Activated CD4-positive, alpha-beta T cell treated with anti-CD3 and anti-CD28 coated beads, Interleukin-2, amount 10 ng/mL, durations not matched to agents 24 days and 14 days (primary cell): ENCODE measurements at regions of chr6 and their contacts with region 1.

Region 1: GRCh38 chr6:13668291-13668928 is 43.2 kb downstream of the RANBP9 start:
- DNase-seq: no peak
- H3K4me3 Mint-ChIP-seq: peak overlapping the region; percentile 14
- H3K27ac Mint-ChIP-seq: peak overlapping the region; percentile 65
- H3K4me1 Mint-ChIP-seq: peaks cover 61% of the 10 kb centered on the region
- H3K27me3 Mint-ChIP-seq: no peaks in the 10 kb centered on the region

Region 2: DNA sequence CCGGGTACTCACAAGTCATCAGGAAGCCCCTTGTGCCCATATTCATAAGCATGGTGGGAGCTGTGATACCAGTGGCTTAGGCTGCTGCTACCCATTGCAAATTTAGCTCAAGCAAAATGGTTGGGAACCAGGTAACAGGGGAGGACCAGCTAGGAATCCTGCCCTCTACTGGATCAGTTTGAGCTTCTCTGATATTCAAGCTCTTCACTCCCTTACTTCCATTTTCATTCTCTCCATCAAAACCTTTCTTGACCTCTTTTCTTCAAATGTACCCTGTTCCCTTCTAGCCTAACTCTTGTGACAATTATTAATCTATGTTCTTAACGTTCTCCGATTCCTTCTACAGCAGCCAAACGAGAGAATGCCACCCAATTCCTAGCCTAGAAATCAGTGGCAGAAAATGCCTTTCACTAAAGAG is 43.5 kb before region 1 on chr6:
- intact Hi-C with region 1: loop called (anchors 1 kb)
- DNase-seq: peak; percentile 74
- H3K4me3 Mint-ChIP-seq: no peak overlapping the region
- H3K27ac Mint-ChIP-seq: no peak overlapping the region
- H3K4me1 Mint-ChIP-seq: peaks cover 11% of the 10 kb centered on the region
- H3K27me3 Mint-ChIP-seq: no peaks in the 10 kb centered on the region

Region 3: DNA sequence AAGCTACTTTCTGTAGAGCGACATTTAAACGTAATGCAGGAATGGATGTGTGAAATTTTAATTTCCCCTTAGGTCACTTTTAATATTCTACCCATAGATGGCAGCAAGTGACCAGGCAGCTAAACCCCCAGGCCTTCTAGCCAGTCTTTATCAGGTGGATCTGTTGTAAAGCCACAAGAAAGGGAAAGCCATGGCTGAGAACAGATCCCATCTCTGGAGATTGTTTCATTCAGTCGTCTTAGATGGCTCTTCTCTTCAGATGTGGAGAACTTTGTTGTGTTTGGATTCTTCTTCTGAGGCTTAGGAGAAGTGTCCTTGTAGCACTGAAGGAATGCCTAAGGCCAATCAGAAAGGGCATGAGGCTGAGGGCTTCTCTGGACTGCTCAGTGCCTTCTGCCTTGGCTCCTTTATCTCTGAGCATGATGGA is 240.6 kb after region 1 on chr6:
- intact Hi-C with region 1: no loop called
- DNase-seq: peak; percentile 80
- H3K4me3 Mint-ChIP-seq: no peak overlapping the region
- H3K27ac Mint-ChIP-seq: no peak overlapping the region
- H3K4me1 Mint-ChIP-seq: peaks cover 6% of the 10 kb centered on the region
- H3K27me3 Mint-ChIP-seq: peaks cover 45% of the 10 kb centered on the region